T-cell (primary cell): ENCODE measurements at regions of chr14 and their contacts with region 1.

Region 1: DNA sequence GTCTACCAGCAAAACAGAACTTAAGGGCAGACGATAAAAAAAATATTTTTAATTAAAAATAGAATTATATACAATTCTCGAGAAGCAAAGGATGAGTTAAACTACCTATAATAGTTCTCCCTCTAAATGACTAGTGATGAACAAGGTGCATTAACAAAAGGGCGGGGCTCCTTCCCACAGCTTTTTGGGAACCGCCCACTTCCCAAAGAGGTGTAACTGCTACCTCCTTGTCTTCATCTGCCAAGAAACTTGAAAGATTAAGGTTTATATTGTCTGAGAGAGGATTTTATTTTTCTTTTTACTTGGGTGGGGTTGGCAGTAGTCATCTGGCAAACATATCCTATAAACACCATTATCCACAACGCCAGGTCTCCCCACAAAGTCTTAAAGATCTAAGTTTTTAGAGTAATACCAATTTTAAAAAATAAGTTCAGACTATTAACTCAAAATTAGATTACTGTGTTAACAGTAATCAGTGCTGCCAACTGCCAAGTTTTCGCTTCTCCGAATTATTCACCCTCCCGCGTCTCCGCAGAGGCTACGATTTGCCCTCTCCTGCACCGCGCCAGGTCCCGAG is 931 bp downstream of the RALGAPA1 start:
- DNase-seq: peak in 2 of 35 experiments; percentile 17 to 44
- ATAC-seq: no peak
- H3K4me3 ChIP-seq: peak overlapping the region; percentile 76 to 90
- H3K4me3 Mint-ChIP-seq: peak overlapping the region; percentile 96 to 98 (median 97)
- H3K27ac ChIP-seq: peak overlapping the region; percentile 79
- H3K27ac Mint-ChIP-seq: peak overlapping the region; percentile 91 to 95
- H3K4me1 ChIP-seq: peaks cover 5 to 18% of the 10 kb centered on the region in 2 experiments
- H3K4me1 Mint-ChIP-seq: peaks cover 37 to 43% (median 41%) of the 10 kb centered on the region in 3 donors
- H3K27me3 ChIP-seq: no peaks in the 10 kb centered on the region
- H3K27me3 Mint-ChIP-seq: no peaks in the 10 kb centered on the region

Region 2: GRCh38 chr14:35506461-35506860 is 301.7 kb before region 1 on chr14:
- CTCF ChIA-PET with region 1: no interaction called
- POLR2A ChIA-PET with region 1: interaction called in 1 of 2 experiments, 11 read pairs
- DNase-seq: no peak
- ATAC-seq: no peak
- H3K4me3 ChIP-seq: no peak overlapping the region
- H3K4me3 Mint-ChIP-seq: no peak overlapping the region
- H3K27ac ChIP-seq: no peak overlapping the region
- H3K27ac Mint-ChIP-seq: no peak overlapping the region
- H3K4me1 ChIP-seq: no peaks in the 10 kb centered on the region
- H3K4me1 Mint-ChIP-seq: no peaks in the 10 kb centered on the region
- H3K27me3 ChIP-seq: no peaks in the 10 kb centered on the region
- H3K27me3 Mint-ChIP-seq: peaks cover 4 to 17% of the 10 kb centered on the region in 2 donors

Region 3: GRCh38 chr14:35708073-35708472 is 100.1 kb before region 1 on chr14:
- CTCF ChIA-PET with region 1: no interaction called
- POLR2A ChIA-PET with region 1: no interaction called
- DNase-seq: no peak
- ATAC-seq: no peak
- H3K4me3 ChIP-seq: no peak overlapping the region
- H3K4me3 Mint-ChIP-seq: no peak overlapping the region
- H3K27ac ChIP-seq: no peak overlapping the region
- H3K27ac Mint-ChIP-seq: no peak overlapping the region
- H3K4me1 ChIP-seq: no peaks in the 10 kb centered on the region
- H3K4me1 Mint-ChIP-seq: no peaks in the 10 kb centered on the region
- H3K27me3 ChIP-seq: no peaks in the 10 kb centered on the region
- H3K27me3 Mint-ChIP-seq: no peaks in the 10 kb centered on the region

Region 4: DNA sequence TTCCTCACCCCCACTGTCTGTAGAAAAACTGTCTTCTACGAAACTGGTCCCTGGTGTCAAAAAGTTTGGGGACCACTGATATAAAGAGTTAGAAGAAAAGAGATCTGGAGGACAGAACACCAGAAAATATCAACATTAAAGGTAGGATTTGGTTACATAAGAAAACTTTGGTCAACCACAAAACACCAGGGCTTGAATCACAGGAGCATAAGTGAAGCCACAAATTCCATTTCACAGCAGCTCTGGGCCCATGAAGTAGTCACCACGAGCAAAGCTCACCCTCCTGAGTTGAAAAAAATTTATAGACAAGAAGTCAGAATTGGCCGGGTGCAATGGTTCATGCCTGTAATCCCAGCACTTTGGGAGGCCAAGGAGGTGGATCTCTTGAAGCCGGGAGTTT is 18.5 kb before region 1 on chr14:
- CTCF ChIA-PET with region 1: no interaction called
- POLR2A ChIA-PET with region 1: interaction called in 1 of 2 experiments, 12 read pairs
- DNase-seq: no peak
- ATAC-seq: no peak
- H3K4me3 ChIP-seq: no peak overlapping the region
- H3K4me3 Mint-ChIP-seq: no peak overlapping the region
- H3K27ac ChIP-seq: no peak overlapping the region
- H3K27ac Mint-ChIP-seq: no peak overlapping the region
- H3K4me1 ChIP-seq: peaks cover 0 to 7% of the 10 kb centered on the region in 2 experiments
- H3K4me1 Mint-ChIP-seq: peaks cover 38 to 45% (median 43%) of the 10 kb centered on the region in 3 donors
- H3K27me3 ChIP-seq: no peaks in the 10 kb centered on the region
- H3K27me3 Mint-ChIP-seq: no peaks in the 10 kb centered on the region

Region 5: DNA sequence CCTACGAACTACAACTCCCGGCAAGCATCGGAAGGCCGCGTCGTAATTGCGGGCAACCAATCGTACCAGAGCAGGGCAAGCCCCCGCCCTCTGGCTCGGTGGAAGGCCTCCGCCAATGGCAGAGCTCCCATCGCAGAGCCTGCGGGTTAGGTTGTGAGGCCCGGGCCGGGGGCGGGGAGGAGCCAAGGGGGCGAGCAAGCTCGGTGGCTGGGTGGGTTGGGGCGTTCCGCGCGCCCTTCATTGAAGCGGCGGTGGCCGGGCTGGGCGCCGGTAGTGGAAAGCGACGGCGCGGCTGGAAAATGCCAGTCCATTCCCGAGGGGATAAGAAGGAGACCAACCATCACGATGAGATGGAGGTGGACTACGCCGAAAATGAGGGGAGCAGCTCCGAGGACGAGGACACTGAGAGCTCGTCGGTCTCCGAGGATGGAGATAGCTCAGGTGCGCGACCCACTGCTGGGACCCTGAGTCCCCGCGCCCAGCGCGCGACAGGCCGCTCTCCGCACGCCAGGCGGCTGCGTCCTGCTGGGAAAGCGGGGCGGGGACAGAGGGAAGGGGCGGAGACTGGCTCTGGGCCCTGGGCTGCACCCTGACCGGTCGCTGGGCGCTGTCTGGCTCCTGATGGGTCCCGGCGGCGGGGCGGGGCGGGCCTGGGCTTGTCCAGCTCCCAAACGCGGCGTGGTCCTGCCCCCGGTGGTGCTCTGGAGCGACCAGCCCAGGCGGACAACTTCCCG is 18.2 kb after region 1 on chr14 and contains the start of gene BRMS1L:
- CTCF ChIA-PET with region 1: interaction called in 1 of 2 experiments, 10 read pairs
- POLR2A ChIA-PET with region 1: interaction called, 5 to 33 read pairs
- DNase-seq: peak; percentile 88 to 98 (median 96)
- ATAC-seq: peak; percentile 97 to 100 (median 98)
- H3K4me3 ChIP-seq: peak within 1 kb of the TSS; percentile 83 to 97
- H3K4me3 Mint-ChIP-seq: peak within 1 kb of the TSS; percentile 88 to 93 (median 88)
- H3K27ac ChIP-seq: peak within 1 kb of the TSS; percentile 88
- H3K27ac Mint-ChIP-seq: peak within 1 kb of the TSS; percentile 81 to 92
- H3K4me1 ChIP-seq: peaks cover 9 to 12% of the 10 kb centered on the region in 2 experiments
- H3K4me1 Mint-ChIP-seq: peaks cover 16 to 28% (median 23%) of the 10 kb centered on the region in 3 donors
- H3K27me3 ChIP-seq: no peaks in the 10 kb centered on the region
- H3K27me3 Mint-ChIP-seq: no peaks in the 10 kb centered on the region
- total RNA-seq, gene BRMS1L: 3.9 to 7.7 (median 5.4) TPM

Region 6: GRCh38 chr14:35985495-35986218 is 177.5 kb after region 1 on chr14:
- CTCF ChIA-PET with region 1: no interaction called
- POLR2A ChIA-PET with region 1: no interaction called
- DNase-seq: no peak
- ATAC-seq: no peak
- H3K4me3 ChIP-seq: no peak overlapping the region
- H3K4me3 Mint-ChIP-seq: no peak overlapping the region
- H3K27ac ChIP-seq: no peak overlapping the region
- H3K27ac Mint-ChIP-seq: no peak overlapping the region
- H3K4me1 ChIP-seq: peaks cover 0 to 10% of the 10 kb centered on the region in 2 experiments
- H3K4me1 Mint-ChIP-seq: peaks cover 0 to 10% (median 0%) of the 10 kb centered on the region in 3 donors
- H3K27me3 ChIP-seq: no peaks in the 10 kb centered on the region
- H3K27me3 Mint-ChIP-seq: peaks cover 4 to 8% of the 10 kb centered on the region in 2 donors